ENCODE measurements at regions of chr1 and their contacts with region 1.

Region 1: GRCh38 chr1:113835642-113836307 is 23.5 kb upstream of the RSBN1 start:
- DNase-seq: peak; percentile 72
- ATAC-seq: peak; percentile 28
- H3K4me3 ChIP-seq: no peak overlapping the region
- H3K4me3 Mint-ChIP-seq: no peak overlapping the region
- H3K27ac ChIP-seq: no peak overlapping the region
- H3K27ac Mint-ChIP-seq: no peak overlapping the region
- H3K4me1 ChIP-seq: no peaks in the 10 kb centered on the region
- H3K4me1 Mint-ChIP-seq: peaks cover 2% of the 10 kb centered on the region
- H3K27me3 ChIP-seq: no peaks in the 10 kb centered on the region
- H3K27me3 Mint-ChIP-seq: no peaks in the 10 kb centered on the region
- CTCF ChIP-seq: peak; percentile 86

Region 2: GRCh38 chr1:113542221-113542701 is 293.5 kb before region 1 on chr1:
- CTCF ChIA-PET with region 1: no interaction called
- POLR2A ChIA-PET with region 1: no interaction called
- intact Hi-C with region 1: no loop called
- DNase-seq: no peak
- ATAC-seq: no peak
- H3K4me3 ChIP-seq: no peak overlapping the region
- H3K4me3 Mint-ChIP-seq: no peak overlapping the region
- H3K27ac ChIP-seq: no peak overlapping the region
- H3K27ac Mint-ChIP-seq: no peak overlapping the region
- H3K4me1 ChIP-seq: no peaks in the 10 kb centered on the region
- H3K4me1 Mint-ChIP-seq: no peaks in the 10 kb centered on the region
- H3K27me3 ChIP-seq: no peaks in the 10 kb centered on the region
- H3K27me3 Mint-ChIP-seq: no peaks in the 10 kb centered on the region
- CTCF ChIP-seq: no peak

Region 3: DNA sequence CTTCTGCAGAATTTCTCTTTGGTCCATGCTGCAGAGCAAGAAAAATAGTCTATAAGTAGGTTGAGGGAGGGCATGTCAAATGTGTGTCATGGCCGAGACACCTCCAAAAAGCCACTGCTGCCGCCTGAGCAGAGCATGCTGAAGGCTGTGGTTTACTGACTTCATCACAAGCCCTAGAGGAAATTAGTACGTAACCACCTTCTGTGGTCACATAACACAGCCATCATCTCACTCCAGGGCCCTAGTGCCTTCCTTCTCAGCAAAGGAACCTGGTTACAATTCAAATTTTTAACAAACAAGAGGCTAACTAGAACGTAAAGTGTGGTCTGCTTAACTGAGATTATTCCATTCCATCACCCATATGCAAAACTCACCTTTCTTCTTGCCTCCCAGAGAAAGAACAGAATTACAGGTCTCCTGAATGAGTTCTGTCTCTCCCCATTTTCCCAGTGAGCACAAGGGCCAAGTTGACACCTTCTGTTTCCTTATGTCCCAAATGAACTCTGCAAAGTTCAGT is 35.9 kb after region 1 on chr1 and contains the start of gene PTPN22:
- CTCF ChIA-PET with region 1: interaction called, 12 read pairs
- POLR2A ChIA-PET with region 1: no interaction called
- intact Hi-C with region 1: loop called (anchors 1 kb)
- DNase-seq: peak; percentile 88
- ATAC-seq: peak; percentile 93
- H3K4me3 ChIP-seq: peak within 1 kb of the TSS; percentile 52 to 72 (median 66)
- H3K4me3 Mint-ChIP-seq: peak within 1 kb of the TSS; percentile 92
- H3K27ac ChIP-seq: peak within 1 kb of the TSS; percentile 84 to 91
- H3K27ac Mint-ChIP-seq: peak within 1 kb of the TSS; percentile 96
- H3K4me1 ChIP-seq: peaks cover 50 to 52% of the 10 kb centered on the region in 2 donors
- H3K4me1 Mint-ChIP-seq: peaks cover 67% of the 10 kb centered on the region
- H3K27me3 ChIP-seq: no peaks in the 10 kb centered on the region
- H3K27me3 Mint-ChIP-seq: no peaks in the 10 kb centered on the region
- CTCF ChIP-seq: no peak
- total RNA-seq, gene PTPN22: 34.4 and 37.4 TPM in 2 replicates

Region 4: GRCh38 chr1:113904674-113905434 is 69.1 kb after region 1 on chr1 and contains the starts of genes AP4B1 and DCLRE1B:
- CTCF ChIA-PET with region 1: interaction called, 80 read pairs
- POLR2A ChIA-PET with region 1: interaction called, 5 read pairs
- intact Hi-C with region 1: loop called (anchors 1 kb)
- DNase-seq: peak; percentile 99
- ATAC-seq: peak; percentile 90
- H3K4me3 ChIP-seq: peak within 1 kb of the TSS; percentile 87 to 98 (median 92)
- H3K4me3 Mint-ChIP-seq: peak within 1 kb of the TSS; percentile 92
- H3K27ac ChIP-seq: peak within 1 kb of the TSS; percentile 87 to 93
- H3K27ac Mint-ChIP-seq: peak within 1 kb of the TSS; percentile 99
- H3K4me1 ChIP-seq: peaks cover 32 to 39% of the 10 kb centered on the region in 2 donors
- H3K4me1 Mint-ChIP-seq: peaks cover 43% of the 10 kb centered on the region
- H3K27me3 ChIP-seq: no peaks in the 10 kb centered on the region
- H3K27me3 Mint-ChIP-seq: no peaks in the 10 kb centered on the region
- CTCF ChIP-seq: peak; percentile 71
- total RNA-seq, gene AP4B1: 51.5 and 52.2 TPM in 2 replicates
- total RNA-seq, gene DCLRE1B: 4.3 and 4.8 TPM in 2 replicates

Region 5: DNA sequence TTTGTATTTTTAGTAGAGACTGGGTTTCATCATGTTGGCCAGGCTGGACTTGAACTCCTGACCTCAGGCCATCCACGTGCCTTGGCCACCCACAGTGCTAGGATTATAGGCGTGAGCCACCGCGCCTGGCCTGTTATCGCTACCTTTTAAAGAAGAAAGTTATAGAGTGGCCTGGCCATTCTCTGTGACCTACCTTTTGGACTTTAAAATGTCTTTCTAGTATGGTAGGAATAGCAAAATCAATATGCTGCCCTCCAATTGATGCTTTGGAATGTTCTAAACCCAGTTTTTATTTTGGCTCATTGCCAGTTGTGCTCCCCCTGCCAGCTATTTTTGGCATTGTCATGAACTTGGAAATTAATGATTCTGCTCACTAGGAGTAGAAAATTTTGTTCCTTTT is 113.2 kb after region 1 on chr1:
- CTCF ChIA-PET with region 1: interaction called, 15 read pairs
- POLR2A ChIA-PET with region 1: interaction called, 3 read pairs
- intact Hi-C with region 1: loop called (anchors 5 kb)
- DNase-seq: peak; percentile 31
- ATAC-seq: no peak
- H3K4me3 ChIP-seq: no peak overlapping the region
- H3K4me3 Mint-ChIP-seq: no peak overlapping the region
- H3K27ac ChIP-seq: no peak overlapping the region
- H3K27ac Mint-ChIP-seq: no peak overlapping the region
- H3K4me1 ChIP-seq: peaks cover 16 to 25% of the 10 kb centered on the region in 2 donors
- H3K4me1 Mint-ChIP-seq: peaks cover 38% of the 10 kb centered on the region
- H3K27me3 ChIP-seq: no peaks in the 10 kb centered on the region
- H3K27me3 Mint-ChIP-seq: no peaks in the 10 kb centered on the region
- CTCF ChIP-seq: peak; percentile 38

Region 6: DNA sequence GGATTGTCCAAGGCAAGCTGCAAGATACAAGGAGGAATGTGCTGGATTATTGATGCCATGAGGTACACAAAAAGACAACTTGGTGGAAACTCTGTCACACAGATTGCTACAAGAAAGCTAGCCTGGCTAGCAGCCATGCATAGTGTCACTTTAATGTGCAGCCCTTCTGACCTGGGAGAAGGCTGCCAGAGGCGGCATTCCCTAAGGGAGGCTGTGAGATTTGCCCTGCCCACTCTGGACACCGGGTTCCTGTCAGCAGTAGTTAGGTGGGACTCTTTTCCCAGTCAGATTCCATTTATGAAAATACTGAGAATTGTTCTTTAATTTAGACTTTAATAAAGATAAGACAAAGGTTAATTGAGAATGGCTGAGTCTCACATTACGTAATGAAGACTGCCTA is 365.7 kb after region 1 on chr1:
- CTCF ChIA-PET with region 1: no interaction called
- POLR2A ChIA-PET with region 1: no interaction called
- intact Hi-C with region 1: no loop called
- DNase-seq: no peak
- ATAC-seq: no peak
- H3K4me3 ChIP-seq: no peak overlapping the region
- H3K4me3 Mint-ChIP-seq: no peak overlapping the region
- H3K27ac ChIP-seq: no peak overlapping the region
- H3K27ac Mint-ChIP-seq: no peak overlapping the region
- H3K4me1 ChIP-seq: no peaks in the 10 kb centered on the region
- H3K4me1 Mint-ChIP-seq: no peaks in the 10 kb centered on the region
- H3K27me3 ChIP-seq: peaks cover 0 to 8% (median 3%) of the 10 kb centered on the region in 4 experiments
- H3K27me3 Mint-ChIP-seq: peaks cover 64% of the 10 kb centered on the region
- CTCF ChIP-seq: no peak

Measured in B cell (primary cell).